K562 (cell line): ENCODE measurements at regions of chr20 and their contacts with region 1.

Region 1: GRCh38 chr20:32634041-32634805 is 39.5 kb downstream of the C20orf203 start:
- DNase-seq: peak in 3 of 4 experiments; percentile 45 to 84 (median 64)
- ATAC-seq: peak; percentile 72
- H3K4me3 ChIP-seq: no peak overlapping the region
- H3K27ac ChIP-seq: peak overlapping the region; percentile 85
- H3K4me1 ChIP-seq: peaks cover 57 to 71% of the 10 kb centered on the region in 2 experiments
- H3K27me3 ChIP-seq: no peaks in the 10 kb centered on the region
- CTCF ChIP-seq: no peak
- EP300 ChIP-seq: peak; percentile 57
- POLR2A ChIP-seq: 0 out of 2 replicates have a peak, but pooled peaks have one; percentile 20
- RAD21 ChIP-seq: 0 out of 4 replicates have a peak, but pooled peaks of 1 of the 2 experiments have one; percentile 13

Region 2: GRCh38 chr20:32316667-32317066 is 317.6 kb before region 1 on chr20:
- CTCF ChIA-PET with region 1: no interaction called
- POLR2A ChIA-PET with region 1: no interaction called
- in situ Hi-C with region 1: no loop called
- intact Hi-C with region 1: no loop called
- DNase-seq: no peak
- ATAC-seq: no peak
- H3K4me3 ChIP-seq: no peak overlapping the region
- H3K27ac ChIP-seq: no peak overlapping the region
- H3K4me1 ChIP-seq: peaks cover 0 to 4% of the 10 kb centered on the region in 2 experiments; a peak in 2 of 5 replicates
- H3K27me3 ChIP-seq: no peaks in the 10 kb centered on the region
- CTCF ChIP-seq: no peak
- EP300 ChIP-seq: no peak
- POLR2A ChIP-seq: no peak
- RAD21 ChIP-seq: no peak

Region 3: DNA sequence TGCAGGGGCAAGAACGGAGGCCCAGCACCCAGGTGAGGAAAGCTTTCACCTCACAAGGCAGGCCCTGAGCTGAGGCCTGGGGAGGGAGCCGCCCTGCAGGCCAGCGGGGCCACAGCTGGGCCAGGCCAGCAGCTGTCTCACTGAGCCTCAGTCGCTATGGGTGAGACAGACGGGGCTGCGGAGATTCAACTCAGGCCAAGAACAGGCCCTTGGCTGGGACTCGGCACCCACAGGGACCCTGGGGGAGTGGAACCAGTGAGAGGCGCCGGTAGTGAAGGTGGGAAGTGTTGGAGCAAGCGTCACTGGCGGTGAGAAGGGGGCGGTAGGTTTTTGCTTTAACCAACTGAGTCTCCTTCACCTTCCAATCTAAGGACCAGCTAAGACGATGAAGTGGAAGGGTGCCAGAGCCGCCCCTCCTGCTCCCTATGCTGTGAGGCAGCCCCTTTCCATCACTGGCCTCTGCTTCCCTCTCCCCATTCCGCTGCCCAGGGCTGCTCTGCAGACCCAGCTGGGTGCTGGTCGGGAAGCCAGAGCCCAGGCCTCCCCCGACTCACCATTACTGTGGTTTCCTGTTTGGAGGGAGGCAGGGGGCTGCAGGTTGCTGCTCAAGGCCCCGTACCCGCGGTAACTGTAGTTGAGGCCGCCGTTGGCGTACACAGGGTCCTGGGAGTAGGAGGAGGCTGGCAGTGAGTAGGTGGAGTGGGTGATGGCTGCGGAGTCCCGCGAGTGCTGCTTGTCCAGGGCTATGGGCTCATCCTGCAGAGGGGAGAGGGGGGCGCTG is 182.4 kb before region 1 on chr20:
- CTCF ChIA-PET with region 1: no interaction called
- POLR2A ChIA-PET with region 1: no interaction called
- in situ Hi-C with region 1: no loop called
- intact Hi-C with region 1: no loop called
- DNase-seq: no peak
- ATAC-seq: peak; percentile 59
- H3K4me3 ChIP-seq: no peak overlapping the region
- H3K27ac ChIP-seq: no peak overlapping the region
- H3K4me1 ChIP-seq: peaks cover 0 to 14% of the 10 kb centered on the region in 2 experiments; a peak in 2 of 5 replicates
- H3K27me3 ChIP-seq: no peaks in the 10 kb centered on the region
- CTCF ChIP-seq: 0 out of 6 replicates have a peak, but pooled peaks of 1 of the 3 experiments have one; percentile 11
- EP300 ChIP-seq: no peak
- POLR2A ChIP-seq: no peak
- RAD21 ChIP-seq: 0 out of 4 replicates have a peak, but pooled peaks of 1 of the 2 experiments have one; percentile 6

Region 4: DNA sequence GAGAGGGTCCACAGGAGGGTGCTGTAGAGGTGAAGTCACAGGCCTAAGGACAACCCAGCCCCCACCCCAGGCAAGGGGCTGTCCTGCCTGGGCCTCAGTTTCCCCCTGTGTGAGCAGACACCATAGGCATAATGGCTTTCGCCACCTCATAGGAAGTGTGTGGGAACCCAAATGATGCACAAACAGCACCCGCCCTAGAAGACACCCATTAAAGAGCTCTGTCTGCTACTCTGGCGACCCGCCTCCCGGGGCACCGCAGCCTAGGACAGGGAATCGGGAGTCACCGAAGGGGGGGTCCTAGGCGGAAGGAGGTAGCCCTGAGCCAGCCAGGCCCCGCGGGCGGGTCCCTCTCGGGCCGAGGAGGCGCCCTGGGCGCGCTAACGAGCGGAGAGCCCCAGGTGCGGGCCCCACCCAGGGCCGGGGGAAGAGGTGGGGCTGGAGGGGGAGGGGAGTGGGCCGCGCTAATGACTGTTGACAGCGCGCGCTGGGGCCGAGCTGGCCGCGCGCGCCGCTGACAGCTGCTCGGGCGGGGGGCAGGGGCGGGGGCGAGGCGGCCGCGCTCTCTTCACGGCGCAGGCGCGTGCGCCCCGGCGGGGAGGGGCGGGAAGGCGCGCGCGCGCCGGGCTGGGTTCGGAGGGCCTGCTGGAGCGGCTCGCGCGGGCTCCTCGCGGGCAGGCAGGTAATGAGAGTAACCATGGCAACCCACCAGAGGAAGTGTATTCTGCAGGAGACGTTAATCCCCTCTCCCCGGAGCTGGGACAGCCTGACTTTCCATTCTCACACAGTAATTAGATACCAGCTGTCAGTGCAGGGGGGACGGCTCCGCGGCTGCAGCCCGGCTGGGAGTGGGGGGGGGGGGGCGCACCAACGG is 98.0 kb before region 1 on chr20:
- CTCF ChIA-PET with region 1: no interaction called
- POLR2A ChIA-PET with region 1: interaction called, 5 read pairs
- in situ Hi-C with region 1: no loop called
- intact Hi-C with region 1: loop called (anchors 5 kb)
- DNase-seq: peak; percentile 90 to 96 (median 92)
- ATAC-seq: peak; percentile 82
- H3K4me3 ChIP-seq: peak overlapping the region; percentile 37; the same call in 1 of the 2 replicates
- H3K27ac ChIP-seq: peak overlapping the region; percentile 65; the same call in 2 of the 3 replicates
- H3K4me1 ChIP-seq: peaks cover 54 to 65% of the 10 kb centered on the region in 2 experiments
- H3K27me3 ChIP-seq: no peaks in the 10 kb centered on the region
- CTCF ChIP-seq: peak in 1 of 3 experiments; percentile 0; a peak in 1 of 6 replicates
- EP300 ChIP-seq: no peak
- POLR2A ChIP-seq: no peak
- RAD21 ChIP-seq: peak in 1 of 2 experiments; percentile 18; a peak in 1 of 4 replicates

Region 5: DNA sequence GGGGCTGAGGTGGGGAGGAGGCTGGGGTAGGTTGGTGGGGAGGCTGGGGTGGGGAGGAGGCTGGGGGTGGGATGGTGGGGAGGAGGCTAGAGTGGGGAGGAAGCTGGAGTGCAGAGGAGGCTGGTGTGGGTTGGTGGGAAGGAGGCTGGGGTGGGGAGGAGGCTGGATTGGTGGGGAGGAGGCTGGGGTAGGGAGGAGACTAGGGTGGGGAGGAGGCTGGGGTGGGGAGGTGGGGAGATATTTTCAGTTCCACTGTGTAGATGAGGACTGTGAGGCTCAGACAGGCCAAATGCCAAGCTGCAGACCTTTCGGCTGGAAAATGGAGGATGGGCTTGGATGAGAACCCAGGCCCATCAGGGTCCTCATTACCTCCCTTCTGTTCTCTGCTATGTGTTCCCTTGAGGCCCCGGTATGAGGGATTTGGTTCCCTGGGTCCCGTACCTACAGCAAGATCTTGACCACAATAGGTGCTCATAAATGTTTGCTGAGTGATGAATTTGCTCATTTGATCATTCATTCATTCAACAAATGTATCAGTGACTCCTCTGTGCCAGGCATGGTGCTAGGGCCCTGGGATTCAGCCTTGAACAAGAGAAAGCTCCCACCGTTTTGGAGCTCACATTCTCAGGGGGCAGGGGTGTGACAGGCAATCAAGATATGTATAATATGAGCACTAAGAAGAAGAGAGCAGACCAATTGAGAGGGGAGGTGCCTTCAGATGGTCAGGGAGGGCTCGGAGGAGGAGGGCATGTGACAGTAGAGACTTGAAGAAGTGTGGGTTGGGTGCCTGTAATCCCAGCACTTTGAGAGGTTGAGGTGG is 12.9 kb before region 1 on chr20:
- CTCF ChIA-PET with region 1: no interaction called
- POLR2A ChIA-PET with region 1: interaction called, 39 read pairs
- in situ Hi-C with region 1: no loop called
- intact Hi-C with region 1: no loop called
- DNase-seq: peak; percentile 95 to 100 (median 98)
- ATAC-seq: peak; percentile 83
- H3K4me3 ChIP-seq: no peak overlapping the region
- H3K27ac ChIP-seq: peak overlapping the region; percentile 60
- H3K4me1 ChIP-seq: peaks cover 27 to 52% of the 10 kb centered on the region in 2 experiments
- H3K27me3 ChIP-seq: no peaks in the 10 kb centered on the region
- CTCF ChIP-seq: no peak
- EP300 ChIP-seq: no peak
- POLR2A ChIP-seq: peak; percentile 48; the same call in 1 of the 2 replicates
- RAD21 ChIP-seq: no peak